ENCODE measurements at regions of chr5 and their contacts with region 1.

Region 1: DNA sequence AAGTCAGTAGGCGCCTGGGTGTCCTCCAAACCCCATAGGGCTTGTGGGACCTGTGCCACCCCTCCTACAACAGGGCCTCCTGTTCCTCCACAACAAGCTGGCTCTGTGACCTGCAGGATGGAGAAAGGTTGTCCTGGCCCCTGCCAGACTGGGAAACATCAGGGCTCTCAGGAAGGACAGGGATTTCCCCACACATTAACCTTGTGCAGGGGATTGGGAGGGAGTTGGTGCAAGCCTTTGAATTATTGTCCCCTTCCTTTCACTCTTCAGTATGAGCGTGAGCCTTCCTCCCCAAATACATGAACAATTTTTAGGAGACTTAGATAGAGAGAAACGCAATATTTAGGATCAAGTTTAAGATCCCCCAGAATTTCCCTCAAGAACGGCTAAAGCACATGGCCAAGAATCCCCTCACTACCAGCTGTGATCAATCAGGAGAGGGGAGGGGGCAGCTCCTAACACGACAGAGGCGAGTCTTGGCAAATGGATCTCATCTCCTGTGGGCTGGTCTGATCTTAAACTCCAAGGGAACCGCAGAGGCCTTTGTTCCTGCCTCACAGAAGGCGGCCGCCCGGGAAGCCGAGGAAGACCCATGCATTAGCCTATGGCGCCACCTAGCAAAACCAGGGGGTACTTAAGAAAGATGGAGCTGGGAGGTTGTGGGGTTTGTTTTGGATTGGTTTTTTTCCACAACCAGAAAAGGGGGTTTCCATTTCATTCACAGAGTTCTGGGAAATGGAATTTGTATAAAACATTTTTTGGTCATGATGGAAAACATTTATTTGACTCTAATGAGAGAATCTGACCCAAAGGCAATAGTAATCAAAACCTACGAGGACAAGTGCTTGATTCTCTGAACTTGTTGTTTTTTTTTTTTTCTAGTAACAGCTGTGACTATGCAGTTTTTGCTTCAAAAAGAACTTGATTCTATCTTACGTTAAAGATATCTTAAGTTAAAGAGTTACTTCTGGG is 36.1 kb upstream of the OSMR start:
- DNase-seq: peak; percentile 80 to 87
- ATAC-seq: peak; percentile 78 to 89
- H3K4me3 ChIP-seq: no peak overlapping the region
- H3K27ac ChIP-seq: peak overlapping the region; percentile 46 to 79; a peak in 4 of 6 replicates
- H3K4me1 ChIP-seq: peaks cover 43% of the 10 kb centered on the region
- CTCF ChIP-seq: peak; percentile 89
- EP300 ChIP-seq: no peak
- POLR2A ChIP-seq: no peak
- RAD21 ChIP-seq: peak; percentile 96 to 99

Region 2: GRCh38 chr5:38265546-38266179 is 544.0 kb before region 1 on chr5:
- CTCF ChIA-PET with region 1: interaction called, 16 read pairs
- POLR2A ChIA-PET with region 1: no interaction called
- DNase-seq: peak; percentile 46 to 51
- ATAC-seq: peak; percentile 93 to 99
- H3K4me3 ChIP-seq: no peak overlapping the region
- H3K27ac ChIP-seq: no peak overlapping the region
- H3K4me1 ChIP-seq: no peaks in the 10 kb centered on the region
- CTCF ChIP-seq: peak; percentile 72
- EP300 ChIP-seq: no peak
- POLR2A ChIP-seq: no peak
- RAD21 ChIP-seq: peak; percentile 35 to 38; a peak in 2 of 5 replicates

Region 3: DNA sequence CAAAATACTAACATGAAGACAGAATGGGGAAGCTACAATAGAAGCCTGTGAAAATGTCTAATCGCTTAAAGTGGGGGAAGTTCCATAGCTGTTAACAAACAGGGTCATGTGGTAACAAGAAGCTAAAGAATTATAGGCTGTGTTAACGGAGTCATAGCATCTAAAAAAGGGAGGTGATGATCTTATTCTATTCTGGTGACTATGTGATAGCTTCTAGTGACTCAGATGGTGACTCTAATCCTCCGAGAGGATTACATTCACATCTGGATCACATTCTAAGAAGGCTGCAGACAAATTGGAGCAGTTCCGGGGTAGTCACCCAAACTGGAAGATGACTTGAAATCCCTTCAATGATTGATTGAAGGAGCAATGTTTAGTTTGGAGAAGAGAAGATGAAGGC is 395.3 kb before region 1 on chr5:
- CTCF ChIA-PET with region 1: interaction called, 152 read pairs
- POLR2A ChIA-PET with region 1: no interaction called
- DNase-seq: no peak
- ATAC-seq: no peak
- H3K4me3 ChIP-seq: no peak overlapping the region
- H3K27ac ChIP-seq: no peak overlapping the region
- H3K4me1 ChIP-seq: no peaks in the 10 kb centered on the region
- CTCF ChIP-seq: no peak
- EP300 ChIP-seq: no peak
- POLR2A ChIP-seq: no peak
- RAD21 ChIP-seq: no peak

Region 4: GRCh38 chr5:38433160-38433861 is 376.4 kb before region 1 on chr5:
- CTCF ChIA-PET with region 1: interaction called, 19 read pairs
- POLR2A ChIA-PET with region 1: no interaction called
- DNase-seq: no peak
- ATAC-seq: peak; percentile 32 to 45; a peak in 3 of 6 replicates
- H3K4me3 ChIP-seq: no peak overlapping the region
- H3K27ac ChIP-seq: no peak overlapping the region
- H3K4me1 ChIP-seq: no peaks in the 10 kb centered on the region
- CTCF ChIP-seq: no peak
- EP300 ChIP-seq: no peak
- POLR2A ChIP-seq: no peak
- RAD21 ChIP-seq: no peak

Region 5: DNA sequence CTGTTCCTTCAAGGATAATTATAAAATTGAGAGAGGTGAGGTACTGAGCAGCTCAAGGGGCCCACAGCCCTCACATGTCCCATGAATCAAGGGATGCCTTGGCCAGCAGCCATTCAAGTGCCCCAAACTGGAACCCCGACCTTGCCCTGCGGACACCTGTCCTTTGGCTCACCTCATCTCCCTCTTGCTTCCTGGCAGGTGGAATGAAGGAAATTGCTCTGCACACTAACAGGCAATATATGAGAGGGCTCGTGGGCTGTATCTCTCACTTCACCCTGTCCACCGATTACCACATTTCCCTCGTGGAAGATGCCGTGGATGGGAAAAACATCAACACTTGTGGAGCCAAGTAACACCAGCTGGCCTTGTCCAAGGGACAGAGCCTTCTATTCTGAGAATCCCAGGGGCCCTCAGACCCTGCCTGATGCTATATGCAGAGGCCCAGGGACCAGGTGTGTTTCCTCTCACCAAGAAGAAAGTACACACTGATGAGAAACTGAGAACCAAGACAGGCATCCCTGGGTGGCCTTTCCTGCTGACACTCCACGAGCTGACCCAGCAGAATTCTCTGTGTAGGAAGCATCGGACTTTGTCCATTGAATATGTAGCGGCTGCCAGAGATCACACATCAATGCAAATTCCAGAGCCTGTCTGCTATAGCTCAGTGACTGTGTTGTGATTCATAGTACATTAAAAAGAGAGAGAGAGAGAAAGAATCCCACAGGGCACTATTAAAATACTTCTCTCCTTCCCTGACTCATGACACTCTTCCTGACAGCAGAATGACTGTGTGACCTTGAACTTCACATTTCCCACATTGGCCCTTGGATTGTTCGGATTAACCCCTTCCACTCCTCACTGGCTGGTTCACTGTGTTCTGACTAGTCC is 345.8 kb before region 1 on chr5:
- CTCF ChIA-PET with region 1: interaction called, 13 read pairs
- POLR2A ChIA-PET with region 1: interaction called, 3 read pairs
- DNase-seq: peak; percentile 57 to 82
- ATAC-seq: peak; percentile 79 to 87
- H3K4me3 ChIP-seq: no peak overlapping the region
- H3K27ac ChIP-seq: peak overlapping the region; percentile 73 to 85
- H3K4me1 ChIP-seq: peaks cover 61% of the 10 kb centered on the region
- CTCF ChIP-seq: no peak
- EP300 ChIP-seq: peak; percentile 61 to 83; a peak in 3 of 5 replicates
- POLR2A ChIP-seq: no peak
- RAD21 ChIP-seq: peak in 1 of 2 experiments; percentile 5; a peak in 1 of 5 replicates

Region 6: GRCh38 chr5:38556599-38557305 is 252.9 kb before region 1 on chr5 and contains the start of gene LIFR:
- CTCF ChIA-PET with region 1: interaction called, 19 read pairs
- POLR2A ChIA-PET with region 1: no interaction called
- DNase-seq: peak; percentile 58 to 85
- ATAC-seq: peak; percentile 83 to 88
- H3K4me3 ChIP-seq: peak within 1 kb of the TSS; percentile 96
- H3K27ac ChIP-seq: peak within 1 kb of the TSS; percentile 97 to 99
- H3K4me1 ChIP-seq: peaks cover 14% of the 10 kb centered on the region
- CTCF ChIP-seq: no peak
- EP300 ChIP-seq: no peak
- POLR2A ChIP-seq: peak; percentile 84
- RAD21 ChIP-seq: peak; percentile 12 to 24; a peak in 2 of 5 replicates
- polyA plus RNA-seq, gene LIFR: 6.2 and 7.9 TPM in 2 replicates

Region 7: GRCh38 chr5:38728029-38728428 is 81.6 kb before region 1 on chr5:
- CTCF ChIA-PET with region 1: no interaction called
- POLR2A ChIA-PET with region 1: no interaction called
- DNase-seq: no peak
- ATAC-seq: no peak
- H3K4me3 ChIP-seq: no peak overlapping the region
- H3K27ac ChIP-seq: no peak overlapping the region
- H3K4me1 ChIP-seq: peaks cover 14% of the 10 kb centered on the region; the same call in 2 of the 3 replicates
- CTCF ChIP-seq: no peak
- EP300 ChIP-seq: no peak
- POLR2A ChIP-seq: no peak
- RAD21 ChIP-seq: no peak

Region 8: DNA sequence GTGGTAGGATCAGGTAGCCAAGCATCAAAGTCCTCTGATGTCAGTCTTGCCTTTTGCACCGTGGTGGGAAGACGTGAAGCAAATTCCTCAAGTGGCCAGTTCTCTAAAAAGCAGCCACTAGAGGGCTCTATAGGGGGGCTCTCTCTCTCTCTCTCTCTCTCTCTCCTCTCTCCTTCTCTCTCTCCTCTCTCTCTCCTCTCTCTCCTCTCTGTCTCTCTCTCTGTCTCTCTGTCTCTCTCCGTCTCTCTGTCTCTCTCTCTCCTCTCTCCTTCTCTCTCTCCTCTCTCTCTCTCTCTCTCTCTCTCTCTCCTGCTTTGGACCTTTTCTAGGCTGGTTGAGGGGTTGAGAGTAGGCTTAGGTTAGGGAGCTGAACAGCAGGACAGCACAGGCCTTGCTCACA is 22.2 kb after region 1 on chr5:
- CTCF ChIA-PET with region 1: interaction called, 18 read pairs
- POLR2A ChIA-PET with region 1: no interaction called
- DNase-seq: peak in 1 of 2 experiments; percentile 66
- ATAC-seq: peak; percentile 52 to 78; a peak in 3 of 6 replicates
- H3K4me3 ChIP-seq: no peak overlapping the region
- H3K27ac ChIP-seq: 0 out of 6 replicates have a peak overlapping the region, but pooled peaks of 1 of the 2 experiments have one; percentile 11
- H3K4me1 ChIP-seq: peaks cover 19% of the 10 kb centered on the region; the same call in 2 of the 3 replicates
- CTCF ChIP-seq: peak; percentile 50
- EP300 ChIP-seq: no peak
- POLR2A ChIP-seq: no peak
- RAD21 ChIP-seq: peak; percentile 31 to 48; a peak in 3 of 5 replicates

Region 9: DNA sequence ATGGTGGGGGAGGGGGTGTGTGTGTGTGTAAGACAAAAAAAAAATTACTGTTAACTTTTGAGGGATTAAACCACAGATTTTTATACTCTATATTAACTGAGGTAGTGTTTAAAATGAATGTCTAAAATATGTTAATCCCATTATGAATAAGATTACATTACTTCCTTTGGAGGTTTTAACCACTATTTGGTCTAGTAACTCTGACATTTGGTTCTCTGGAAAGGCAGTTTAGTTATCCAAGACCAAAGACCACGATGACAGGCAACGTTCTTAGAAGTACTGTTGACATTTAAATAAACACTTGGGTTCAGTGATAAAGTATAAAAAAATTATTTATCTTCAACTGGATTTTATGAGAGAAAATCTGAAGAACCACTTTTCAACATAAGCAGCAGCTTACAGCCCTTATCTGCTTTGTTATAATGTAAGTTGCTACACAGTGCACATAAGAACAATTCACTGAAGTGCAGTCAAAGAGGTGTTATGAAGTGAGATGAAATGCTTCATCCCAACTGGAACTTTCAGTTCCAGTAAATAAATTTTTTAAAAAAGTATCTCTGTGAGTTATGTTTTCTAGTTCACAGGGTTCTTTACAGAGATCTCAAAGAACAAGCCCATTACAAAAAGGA is 130.7 kb after region 1 on chr5:
- CTCF ChIA-PET with region 1: no interaction called
- POLR2A ChIA-PET with region 1: no interaction called
- DNase-seq: no peak
- ATAC-seq: no peak
- H3K4me3 ChIP-seq: no peak overlapping the region
- H3K27ac ChIP-seq: no peak overlapping the region
- H3K4me1 ChIP-seq: no peaks in the 10 kb centered on the region
- CTCF ChIP-seq: no peak
- EP300 ChIP-seq: no peak
- POLR2A ChIP-seq: no peak
- RAD21 ChIP-seq: no peak